ENCODE measurements at regions of chr16 and their contacts with region 1.

Region 1: GRCh38 chr16:68040507-68041288 is 17.6 kb downstream of the DUS2 start:
- DNase-seq: peak; percentile 76 to 80
- ATAC-seq: peak; percentile 100
- H3K4me3 ChIP-seq: no peak overlapping the region
- H3K27ac ChIP-seq: no peak overlapping the region
- H3K4me1 ChIP-seq: no peaks in the 10 kb centered on the region
- CTCF ChIP-seq: peak; percentile 74
- EP300 ChIP-seq: no peak
- POLR2A ChIP-seq: no peak
- RAD21 ChIP-seq: peak; percentile 77 to 88

Region 2: DNA sequence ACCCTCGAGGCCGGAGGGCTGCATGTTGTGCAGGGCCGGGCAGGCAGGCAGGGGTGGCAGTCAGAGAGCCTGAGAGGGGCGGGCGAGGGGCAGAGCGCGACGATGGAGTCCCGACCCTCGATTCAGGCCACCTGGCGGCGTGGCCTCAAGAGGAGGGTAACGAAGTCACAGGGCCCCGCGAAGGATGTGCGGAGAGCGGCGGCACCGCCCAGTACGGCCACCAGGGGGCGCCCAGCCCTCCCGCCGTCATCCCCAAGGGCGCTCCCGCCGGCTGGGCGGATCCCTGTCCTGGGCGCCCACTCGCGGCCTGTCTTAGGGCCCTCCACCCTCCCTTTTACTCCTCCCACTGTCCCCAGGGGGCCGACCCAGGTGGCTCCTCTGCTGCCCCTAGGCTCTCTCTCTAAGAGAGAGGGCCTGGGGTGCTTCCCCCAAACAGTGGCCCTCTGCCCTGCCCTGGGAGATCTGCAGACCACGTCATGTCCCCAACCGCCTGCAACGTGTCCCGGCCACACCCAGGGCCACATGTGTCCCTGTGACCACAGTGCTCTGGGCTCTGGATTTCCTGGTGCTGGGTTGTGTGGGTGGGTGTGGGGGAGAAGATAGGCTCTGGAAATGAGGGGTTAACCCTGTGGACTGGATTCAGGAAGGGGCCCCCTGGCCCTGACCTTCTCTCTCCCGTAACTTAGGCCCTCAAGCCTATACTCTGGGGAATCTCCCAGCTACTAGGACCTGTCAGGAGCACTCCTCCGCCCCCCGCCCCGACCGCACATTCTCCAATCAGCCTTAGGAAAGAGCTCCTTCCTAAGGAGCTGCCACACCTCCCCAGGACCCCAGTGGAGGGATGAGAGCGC is 47.3 kb before region 1 on chr16:
- CTCF ChIA-PET with region 1: interaction called, 21 read pairs
- POLR2A ChIA-PET with region 1: no interaction called
- DNase-seq: peak; percentile 76 to 80
- ATAC-seq: peak; percentile 92 to 98
- H3K4me3 ChIP-seq: peak overlapping the region; percentile 20; the same call in 1 of the 3 replicates
- H3K27ac ChIP-seq: peak overlapping the region; percentile 66 to 82
- H3K4me1 ChIP-seq: peaks cover 5% of the 10 kb centered on the region; the same call in 1 of the 3 replicates
- CTCF ChIP-seq: peak; percentile 98
- EP300 ChIP-seq: no peak
- POLR2A ChIP-seq: no peak
- RAD21 ChIP-seq: peak; percentile 47 to 73; a peak in 4 of 5 replicates

Region 3: GRCh38 chr16:68022704-68023522 is 17.8 kb before region 1 on chr16 and contains the starts of genes DDX28 and DUS2:
- CTCF ChIA-PET with region 1: interaction called, 18 read pairs
- POLR2A ChIA-PET with region 1: interaction called, 4 read pairs
- DNase-seq: peak; percentile 73 to 95
- ATAC-seq: peak; percentile 90 to 94
- H3K4me3 ChIP-seq: peak within 1 kb of the TSS; percentile 99
- H3K27ac ChIP-seq: peak within 1 kb of the TSS; percentile 92 to 98
- H3K4me1 ChIP-seq: peaks cover 19% of the 10 kb centered on the region
- CTCF ChIP-seq: no peak
- EP300 ChIP-seq: no peak
- POLR2A ChIP-seq: peak; percentile 86
- RAD21 ChIP-seq: no peak
- polyA plus RNA-seq, gene DDX28: 14.0 and 18.3 TPM in 2 replicates
- polyA plus RNA-seq, gene DUS2: 20.7 and 21.5 TPM in 2 replicates

Region 4: DNA sequence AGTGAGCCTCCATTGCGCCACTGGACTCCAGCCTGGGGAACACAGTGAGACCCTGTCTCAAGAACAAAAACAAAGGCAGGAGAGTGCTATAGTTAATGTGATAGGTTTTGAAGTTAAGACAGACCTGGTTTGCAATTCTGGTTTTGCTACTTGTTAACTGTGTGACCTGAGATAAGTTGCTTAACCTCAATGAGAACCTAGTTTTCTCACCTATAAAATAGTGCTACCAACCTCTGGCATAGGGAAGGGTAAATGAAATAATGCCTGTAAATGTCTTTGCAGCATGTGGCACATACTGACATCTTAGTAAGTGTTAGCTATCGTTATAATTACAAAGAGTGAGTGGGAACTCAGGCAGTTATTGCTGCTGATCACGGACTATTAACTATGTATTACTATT is 14.7 kb after region 1 on chr16:
- CTCF ChIA-PET with region 1: interaction called, 19 read pairs
- POLR2A ChIA-PET with region 1: interaction called, 8 read pairs
- DNase-seq: no peak
- ATAC-seq: no peak
- H3K4me3 ChIP-seq: no peak overlapping the region
- H3K27ac ChIP-seq: no peak overlapping the region
- H3K4me1 ChIP-seq: no peaks in the 10 kb centered on the region
- CTCF ChIP-seq: no peak
- EP300 ChIP-seq: no peak
- POLR2A ChIP-seq: no peak
- RAD21 ChIP-seq: no peak

Region 5: DNA sequence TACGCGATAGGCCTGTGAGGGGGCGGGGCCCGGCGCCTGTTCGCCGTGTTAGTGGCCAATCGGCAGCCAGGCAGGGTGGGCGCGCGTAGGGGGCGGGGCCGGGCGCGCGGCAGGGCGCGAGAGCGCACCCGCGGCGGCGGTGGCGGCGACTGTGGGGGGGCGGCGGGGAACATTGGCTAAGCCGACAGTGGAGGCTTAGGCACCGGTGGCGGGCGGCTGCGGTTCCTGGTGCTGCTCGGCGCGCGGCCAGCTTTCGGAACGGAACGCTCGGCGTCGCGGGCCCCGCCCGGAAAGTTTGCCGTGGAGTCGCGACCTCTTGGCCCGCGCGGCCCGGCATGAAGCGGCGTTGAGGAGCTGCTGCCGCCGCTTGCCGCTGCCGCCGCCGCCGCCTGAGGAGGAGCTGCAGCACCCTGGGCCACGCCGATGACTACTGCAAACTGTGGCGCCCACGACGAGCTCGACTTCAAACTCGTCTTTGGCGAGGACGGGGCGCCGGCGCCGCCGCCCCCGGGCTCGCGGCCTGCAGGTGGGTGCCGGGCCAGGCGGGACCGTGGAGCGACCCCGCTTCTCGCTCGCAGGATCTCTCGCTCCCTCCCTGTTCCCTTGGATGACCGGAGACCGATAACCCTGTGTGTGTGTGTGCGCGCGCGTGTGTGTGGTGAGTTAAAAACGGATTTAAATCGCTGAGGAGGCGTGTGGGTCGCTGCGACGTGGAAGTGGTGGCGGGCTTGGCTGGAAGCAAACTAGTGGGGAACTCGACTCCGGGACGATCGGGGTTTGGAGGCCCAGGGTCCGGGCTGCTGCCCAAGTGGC is 44.8 kb after region 1 on chr16 and contains the start of gene NFATC3:
- CTCF ChIA-PET with region 1: interaction called, 17 read pairs
- POLR2A ChIA-PET with region 1: no interaction called
- DNase-seq: peak; percentile 34 to 97
- ATAC-seq: peak; percentile 75 to 84
- H3K4me3 ChIP-seq: peak within 1 kb of the TSS; percentile 96
- H3K27ac ChIP-seq: peak within 1 kb of the TSS; percentile 94 to 95
- H3K4me1 ChIP-seq: peaks cover 34% of the 10 kb centered on the region
- CTCF ChIP-seq: no peak
- EP300 ChIP-seq: no peak
- POLR2A ChIP-seq: peak; percentile 73
- RAD21 ChIP-seq: no peak
- polyA plus RNA-seq, gene NFATC3: 23.9 and 32.4 TPM in 2 replicates

Measured in A549 (cell line).